HCT116 (cell line): ENCODE measurements at regions of chr19 and their contacts with region 1.

Region 1: GRCh38 chr19:17775245-17775916 is 19.6 kb upstream of the B3GNT3 start:
- DNase-seq: no peak
- ATAC-seq: peak; percentile 16
- H3K4me3 ChIP-seq: no peak overlapping the region
- H3K27ac ChIP-seq: no peak overlapping the region; the same call in 1 of the 2 replicates
- H3K4me1 ChIP-seq: peaks cover 21 to 40% of the 10 kb centered on the region in 2 experiments
- H3K27me3 ChIP-seq: no peaks in the 10 kb centered on the region
- CTCF ChIP-seq: peak; percentile 82 to 93 (median 84)
- POLR2A ChIP-seq: no peak
- RAD21 ChIP-seq: peak; percentile 87

Region 2: GRCh38 chr19:17448131-17448967 is 327.0 kb before region 1 on chr19 and contains the start of gene TMEM221:
- CTCF ChIA-PET with region 1: no interaction called
- POLR2A ChIA-PET with region 1: no interaction called
- RAD21 ChIA-PET with region 1: no interaction called
- intact Hi-C with region 1: loop called (anchors 1 kb)
- DNase-seq: no peak
- ATAC-seq: peak; percentile 78
- H3K4me3 ChIP-seq: peak within 1 kb of the TSS; percentile 56 to 70
- H3K27ac ChIP-seq: peak within 1 kb of the TSS; percentile 79; the same call in 1 of the 2 replicates
- H3K4me1 ChIP-seq: peaks cover 24 to 46% of the 10 kb centered on the region in 2 experiments
- H3K27me3 ChIP-seq: no peaks in the 10 kb centered on the region
- CTCF ChIP-seq: peak; percentile 48 to 75 (median 62); a peak in 5 of 6 replicates
- POLR2A ChIP-seq: peak; percentile 31
- RAD21 ChIP-seq: no peak
- total RNA-seq, gene TMEM221: 3.4 TPM

Region 3: GRCh38 chr19:17605761-17606745 is 169.3 kb before region 1 on chr19:
- CTCF ChIA-PET with region 1: interaction called, 7 read pairs
- POLR2A ChIA-PET with region 1: no interaction called
- RAD21 ChIA-PET with region 1: no interaction called
- intact Hi-C with region 1: loop called (anchors 5 kb)
- DNase-seq: peak; percentile 92
- ATAC-seq: peak; percentile 94
- H3K4me3 ChIP-seq: peak overlapping the region; percentile 7 to 37; a peak in 2 of 4 replicates
- H3K27ac ChIP-seq: peak overlapping the region; percentile 87
- H3K4me1 ChIP-seq: peaks cover 8 to 19% of the 10 kb centered on the region in 2 experiments
- H3K27me3 ChIP-seq: no peaks in the 10 kb centered on the region
- CTCF ChIP-seq: peak; percentile 68 to 94 (median 88)
- POLR2A ChIP-seq: peak; percentile 86
- RAD21 ChIP-seq: peak; percentile 75

Region 4: GRCh38 chr19:17658666-17659065 is 116.7 kb before region 1 on chr19:
- CTCF ChIA-PET with region 1: no interaction called
- POLR2A ChIA-PET with region 1: no interaction called
- RAD21 ChIA-PET with region 1: no interaction called
- intact Hi-C with region 1: no loop called
- DNase-seq: no peak
- ATAC-seq: no peak
- H3K4me3 ChIP-seq: no peak overlapping the region
- H3K27ac ChIP-seq: no peak overlapping the region
- H3K4me1 ChIP-seq: peaks cover 14 to 20% of the 10 kb centered on the region in 2 experiments
- H3K27me3 ChIP-seq: no peaks in the 10 kb centered on the region
- CTCF ChIP-seq: no peak
- POLR2A ChIP-seq: no peak
- RAD21 ChIP-seq: no peak

Region 5: GRCh38 chr19:17747205-17748098 is 27.9 kb before region 1 on chr19:
- CTCF ChIA-PET with region 1: interaction called, 3 read pairs
- POLR2A ChIA-PET with region 1: no interaction called
- RAD21 ChIA-PET with region 1: interaction called in 1 of 2 experiments, 4 read pairs
- intact Hi-C with region 1: loop called (anchors 1 kb)
- DNase-seq: peak; percentile 93
- ATAC-seq: peak; percentile 99
- H3K4me3 ChIP-seq: peak overlapping the region; percentile 54 to 61
- H3K27ac ChIP-seq: no peak overlapping the region; the same call in 1 of the 2 replicates
- H3K4me1 ChIP-seq: peaks cover 3 to 20% of the 10 kb centered on the region in 2 experiments; a peak in 3 of 4 replicates
- H3K27me3 ChIP-seq: no peaks in the 10 kb centered on the region
- CTCF ChIP-seq: no peak
- POLR2A ChIP-seq: no peak
- RAD21 ChIP-seq: no peak

Region 6: DNA sequence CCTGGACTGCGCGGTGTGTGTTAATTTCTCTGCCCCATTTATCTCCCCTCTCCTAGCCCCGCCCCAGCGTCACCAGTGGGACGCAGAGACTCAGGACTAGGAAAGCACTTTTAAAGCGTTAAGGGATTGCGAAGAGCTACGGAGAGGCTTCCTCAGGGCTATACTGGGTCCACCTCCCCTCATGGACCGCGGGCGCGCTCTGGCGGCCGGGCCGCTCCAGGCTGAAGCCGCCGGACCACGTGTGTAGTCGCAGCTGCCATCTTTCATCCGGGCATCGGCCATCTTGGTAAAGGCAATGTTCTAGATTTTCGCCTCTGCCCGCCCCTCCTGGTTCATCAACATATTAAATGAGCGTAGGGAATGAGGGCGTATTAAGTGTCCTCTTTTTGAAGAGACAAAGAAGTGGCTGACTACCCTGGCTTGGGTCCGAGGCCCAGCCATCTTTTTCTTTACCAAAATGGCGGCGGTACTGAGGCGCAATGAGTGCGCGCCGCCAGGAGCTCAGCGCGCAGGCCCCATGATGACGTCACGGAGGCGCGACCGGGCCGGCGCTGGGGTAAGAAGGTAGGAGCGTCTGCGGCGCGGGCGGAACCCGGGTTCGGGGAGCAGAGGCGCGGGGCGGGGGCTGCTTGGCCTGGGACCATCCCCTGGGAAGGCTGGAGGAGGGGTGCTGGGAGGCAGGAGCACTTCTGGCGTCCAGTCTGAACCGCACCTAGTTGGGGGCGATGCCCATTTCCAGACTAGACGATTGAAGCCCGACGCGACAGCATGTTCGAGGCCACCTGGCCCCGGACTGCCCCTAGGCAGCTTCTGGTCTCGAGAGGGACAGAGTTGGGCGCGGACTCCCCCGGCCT is 157.3 kb after region 1 on chr19 and contains the start of gene CCDC124:
- CTCF ChIA-PET with region 1: no interaction called
- POLR2A ChIA-PET with region 1: no interaction called
- RAD21 ChIA-PET with region 1: no interaction called
- intact Hi-C with region 1: loop called (anchors 5 kb)
- DNase-seq: peak; percentile 88
- ATAC-seq: peak; percentile 87
- H3K4me3 ChIP-seq: peak within 1 kb of the TSS; percentile 87 to 98
- H3K27ac ChIP-seq: peak within 1 kb of the TSS; percentile 86
- H3K4me1 ChIP-seq: peaks cover 15 to 22% of the 10 kb centered on the region in 2 experiments
- H3K27me3 ChIP-seq: no peaks in the 10 kb centered on the region
- CTCF ChIP-seq: peak; percentile 94 to 97 (median 97)
- POLR2A ChIP-seq: peak; percentile 41
- RAD21 ChIP-seq: peak; percentile 100
- total RNA-seq, gene CCDC124: 177 TPM